Heart left ventricle (tissue), 16 donors: ENCODE measurements at regions of chr4 and their contacts with region 1.

Region 1: GRCh38 chr4:102500696-102501446 is at the start of gene NFKB1:
- DNase-seq: peak; percentile 77 to 84 (median 79)
- ATAC-seq: peak; percentile 20 to 77 (median 62)
- H3K4me3 ChIP-seq: peak within 1 kb of the TSS; percentile 70 to 98 (median 86)
- H3K27ac ChIP-seq: peak within 1 kb of the TSS; percentile 95 to 99 (median 98)
- H3K4me1 ChIP-seq: peaks cover 15 to 45% (median 36%) of the 10 kb centered on the region in 12 donors
- H3K27me3 ChIP-seq: no peaks in the 10 kb centered on the region
- CTCF ChIP-seq: no peak
- POLR2A ChIP-seq: no peak
- total RNA-seq, gene NFKB1: 15.9 to 34.1 (median 19.9) TPM

Region 2: DNA sequence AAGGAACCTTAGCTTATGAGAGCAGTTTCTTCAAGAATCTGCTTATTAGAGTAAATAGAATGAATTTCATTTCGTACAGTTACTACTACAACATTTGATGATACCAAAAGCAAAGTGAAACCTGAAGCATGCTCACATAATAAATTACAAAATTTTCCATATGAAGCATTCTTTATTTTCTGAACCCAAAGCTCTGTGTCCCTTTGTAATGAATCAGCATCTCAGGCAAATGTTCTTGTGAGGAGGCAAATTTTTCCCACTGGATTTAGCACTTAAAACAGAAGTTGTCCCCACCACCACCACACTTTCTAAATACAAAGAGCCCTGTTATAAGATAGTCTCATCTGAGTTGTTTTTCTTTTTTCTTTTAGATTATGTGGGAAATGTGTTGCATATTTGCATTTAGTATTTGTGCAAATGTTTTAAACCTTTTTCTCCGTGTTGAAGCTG is 70.4 kb before region 1 on chr4:
- intact Hi-C with region 1: loop called in 1 of 10 experiments (anchors 5 kb)
- DNase-seq: no peak
- ATAC-seq: peak in 1 of 4 donors; percentile 33
- H3K4me3 ChIP-seq: peak overlapping the region; percentile 15 to 74 (median 62)
- H3K27ac ChIP-seq: peak overlapping the region in 9 of 12 donors; percentile 34 to 73 (median 58)
- H3K4me1 ChIP-seq: peaks cover 0 to 6% (median 0%) of the 10 kb centered on the region in 12 donors
- H3K27me3 ChIP-seq: no peaks in the 10 kb centered on the region
- CTCF ChIP-seq: no peak
- POLR2A ChIP-seq: no peak

Region 3: DNA sequence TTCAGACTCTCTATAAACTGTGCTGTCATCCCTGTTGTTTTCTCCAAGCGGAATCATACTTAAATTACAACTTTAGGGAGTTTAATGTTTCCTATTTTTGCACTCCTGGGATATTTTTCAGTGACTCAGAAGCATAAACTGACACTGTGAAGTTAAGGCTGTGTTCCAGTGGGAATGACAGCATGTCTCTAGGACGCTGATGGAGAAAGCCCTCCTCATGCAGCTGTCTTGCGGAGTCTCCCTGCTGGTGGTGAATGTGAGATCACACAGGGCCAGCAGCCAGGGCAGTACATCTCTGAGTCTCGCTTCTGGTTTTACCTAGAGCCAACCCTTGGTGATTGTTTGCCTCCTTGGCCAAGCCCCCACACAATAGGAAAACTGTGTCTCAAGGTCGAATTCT is 53.6 kb after region 1 on chr4:
- intact Hi-C with region 1: loop called in 3 of 10 experiments (anchors 5 to 10 kb)
- DNase-seq: peak; percentile 49 to 74 (median 61)
- ATAC-seq: peak; percentile 75 to 96 (median 88)
- H3K4me3 ChIP-seq: no peak overlapping the region
- H3K27ac ChIP-seq: peak overlapping the region in 3 of 12 donors; percentile 3 to 36 (median 25)
- H3K4me1 ChIP-seq: peaks cover 0 to 58% (median 28%) of the 10 kb centered on the region in 12 donors
- H3K27me3 ChIP-seq: no peaks in the 10 kb centered on the region
- CTCF ChIP-seq: no peak
- POLR2A ChIP-seq: no peak

Region 4: GRCh38 chr4:102809190-102809589 is 308.3 kb after region 1 on chr4:
- intact Hi-C with region 1: loop called in 1 of 10 experiments (anchors 5 kb)
- DNase-seq: no peak
- ATAC-seq: peak; percentile 84 to 95 (median 92)
- H3K4me3 ChIP-seq: no peak overlapping the region
- H3K27ac ChIP-seq: peak overlapping the region in 4 of 12 donors; percentile 19 to 32 (median 26)
- H3K4me1 ChIP-seq: peaks cover 10 to 86% (median 67%) of the 10 kb centered on the region in 12 donors
- H3K27me3 ChIP-seq: no peaks in the 10 kb centered on the region
- CTCF ChIP-seq: no peak
- POLR2A ChIP-seq: no peak

Region 5: GRCh38 chr4:102860611-102861324 is 359.9 kb after region 1 on chr4:
- intact Hi-C with region 1: no loop called
- DNase-seq: no peak
- ATAC-seq: peak in 1 of 4 donors; percentile 42
- H3K4me3 ChIP-seq: no peak overlapping the region
- H3K27ac ChIP-seq: peak overlapping the region in 1 of 12 donors; percentile 52
- H3K4me1 ChIP-seq: peaks cover 0 to 26% (median 0%) of the 10 kb centered on the region in 12 donors
- H3K27me3 ChIP-seq: no peaks in the 10 kb centered on the region
- CTCF ChIP-seq: no peak
- POLR2A ChIP-seq: no peak

Region 6: GRCh38 chr4:103019308-103020124 is 518.6 kb after region 1 on chr4 and contains the start of gene SLC9B1:
- intact Hi-C with region 1: loop called in 1 of 10 experiments (anchors 5 kb)
- DNase-seq: peak; percentile 95 to 97 (median 96)
- ATAC-seq: peak; percentile 99 to 100 (median 100)
- H3K4me3 ChIP-seq: peak within 1 kb of the TSS; percentile 30 to 67 (median 59)
- H3K27ac ChIP-seq: peak within 1 kb of the TSS; percentile 65 to 92 (median 88)
- H3K4me1 ChIP-seq: peaks cover 0 to 18% (median 5%) of the 10 kb centered on the region in 12 donors
- H3K27me3 ChIP-seq: no peaks in the 10 kb centered on the region
- CTCF ChIP-seq: no peak
- POLR2A ChIP-seq: peak in 1 of 2 donors; percentile 69
- total RNA-seq, gene SLC9B1: 0.28 to 1.8 (median 0.61) TPM in 6 of 9 donors, not detected in the others